Activated CD4-positive, alpha-beta memory T cell treated with anti-CD3 and anti-CD28 coated beads for 36 hours (primary cell): ENCODE measurements at regions of chr3 and their contacts with region 1.

Region 1: GRCh38 chr3:48439820-48440589 is at the starts of genes CCDC51 and TMA7:
- DNase-seq: peak; percentile 99
- H3K4me3 Mint-ChIP-seq: peak within 1 kb of the TSS; percentile 90
- H3K27ac Mint-ChIP-seq: peak within 1 kb of the TSS; percentile 87
- H3K4me1 Mint-ChIP-seq: peaks cover 32% of the 10 kb centered on the region
- H3K27me3 Mint-ChIP-seq: no peaks in the 10 kb centered on the region
- total RNA-seq, gene CCDC51: 24.3 to 24.4 TPM
- total RNA-seq, gene TMA7: 318 to 323 TPM

Region 2: GRCh38 chr3:48188266-48189201 is 251.5 kb before region 1 on chr3 and contains the start of gene CDC25A:
- CTCF ChIA-PET with region 1: interaction called, 31 read pairs
- POLR2A ChIA-PET with region 1: no interaction called
- intact Hi-C with region 1: loop called (anchors 2 kb)
- DNase-seq: peak; percentile 98
- H3K4me3 Mint-ChIP-seq: peak within 1 kb of the TSS; percentile 94
- H3K27ac Mint-ChIP-seq: peak within 1 kb of the TSS; percentile 66
- H3K4me1 Mint-ChIP-seq: peaks cover 14% of the 10 kb centered on the region
- H3K27me3 Mint-ChIP-seq: peaks cover 7% of the 10 kb centered on the region
- total RNA-seq, gene CDC25A: 33.7 to 36.8 TPM

Region 3: GRCh38 chr3:48247401-48247811 is 192.6 kb before region 1 on chr3:
- CTCF ChIA-PET with region 1: interaction called, 20 read pairs
- POLR2A ChIA-PET with region 1: no interaction called
- intact Hi-C with region 1: no loop called
- DNase-seq: peak; percentile 34
- H3K4me3 Mint-ChIP-seq: peak overlapping the region; percentile 27
- H3K27ac Mint-ChIP-seq: peak overlapping the region; percentile 90
- H3K4me1 Mint-ChIP-seq: peaks cover 36% of the 10 kb centered on the region
- H3K27me3 Mint-ChIP-seq: no peaks in the 10 kb centered on the region

Region 4: GRCh38 chr3:48400824-48401433 is 39.1 kb before region 1 on chr3:
- CTCF ChIA-PET with region 1: interaction called, 290 read pairs
- POLR2A ChIA-PET with region 1: interaction called, 7 read pairs
- intact Hi-C with region 1: loop called (anchors 2 kb)
- DNase-seq: peak; percentile 74
- H3K4me3 Mint-ChIP-seq: no peak overlapping the region
- H3K27ac Mint-ChIP-seq: no peak overlapping the region
- H3K4me1 Mint-ChIP-seq: no peaks in the 10 kb centered on the region
- H3K27me3 Mint-ChIP-seq: peaks cover 1% of the 10 kb centered on the region

Region 5: DNA sequence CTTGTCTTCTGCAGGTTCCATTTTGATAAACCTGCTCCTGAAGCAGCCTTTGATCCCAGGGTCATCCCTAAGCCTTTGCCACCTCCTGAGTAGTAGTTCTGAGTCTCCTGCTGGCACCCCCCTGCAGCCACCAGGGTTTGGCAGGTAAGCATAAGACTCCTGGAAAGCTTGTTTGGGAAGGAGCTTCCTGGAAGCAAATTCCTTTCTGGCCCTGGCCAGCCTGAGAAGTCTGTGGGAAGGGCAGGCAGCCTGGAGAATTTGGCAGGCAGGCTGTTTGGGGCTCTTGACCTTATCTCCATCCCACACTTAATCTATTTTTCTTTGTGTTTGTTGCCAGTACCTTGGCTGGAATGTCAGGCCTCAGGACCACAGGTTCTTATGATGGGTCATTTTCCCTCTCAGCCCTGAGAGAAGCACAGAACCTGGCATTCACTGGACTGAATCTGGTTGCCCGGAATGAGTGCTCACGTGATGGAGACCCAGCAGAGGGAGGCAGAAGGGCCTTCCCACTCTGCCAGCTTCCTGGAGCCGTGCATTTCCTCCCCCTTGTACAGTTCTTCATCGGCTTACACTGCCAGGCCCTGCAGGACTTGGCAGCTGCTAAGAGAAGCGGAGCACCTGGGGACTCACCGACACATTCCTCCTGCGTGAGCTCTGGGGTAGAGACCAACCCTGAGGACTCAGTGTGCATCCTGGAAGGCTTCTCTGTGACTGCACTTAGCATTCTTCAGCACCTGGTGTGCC is 19.9 kb after region 1 on chr3:
- CTCF ChIA-PET with region 1: interaction called, 20 read pairs
- POLR2A ChIA-PET with region 1: interaction called, 3 read pairs
- intact Hi-C with region 1: no loop called
- DNase-seq: peak; percentile 0
- H3K4me3 Mint-ChIP-seq: no peak overlapping the region
- H3K27ac Mint-ChIP-seq: no peak overlapping the region
- H3K4me1 Mint-ChIP-seq: no peaks in the 10 kb centered on the region
- H3K27me3 Mint-ChIP-seq: no peaks in the 10 kb centered on the region

Region 6: DNA sequence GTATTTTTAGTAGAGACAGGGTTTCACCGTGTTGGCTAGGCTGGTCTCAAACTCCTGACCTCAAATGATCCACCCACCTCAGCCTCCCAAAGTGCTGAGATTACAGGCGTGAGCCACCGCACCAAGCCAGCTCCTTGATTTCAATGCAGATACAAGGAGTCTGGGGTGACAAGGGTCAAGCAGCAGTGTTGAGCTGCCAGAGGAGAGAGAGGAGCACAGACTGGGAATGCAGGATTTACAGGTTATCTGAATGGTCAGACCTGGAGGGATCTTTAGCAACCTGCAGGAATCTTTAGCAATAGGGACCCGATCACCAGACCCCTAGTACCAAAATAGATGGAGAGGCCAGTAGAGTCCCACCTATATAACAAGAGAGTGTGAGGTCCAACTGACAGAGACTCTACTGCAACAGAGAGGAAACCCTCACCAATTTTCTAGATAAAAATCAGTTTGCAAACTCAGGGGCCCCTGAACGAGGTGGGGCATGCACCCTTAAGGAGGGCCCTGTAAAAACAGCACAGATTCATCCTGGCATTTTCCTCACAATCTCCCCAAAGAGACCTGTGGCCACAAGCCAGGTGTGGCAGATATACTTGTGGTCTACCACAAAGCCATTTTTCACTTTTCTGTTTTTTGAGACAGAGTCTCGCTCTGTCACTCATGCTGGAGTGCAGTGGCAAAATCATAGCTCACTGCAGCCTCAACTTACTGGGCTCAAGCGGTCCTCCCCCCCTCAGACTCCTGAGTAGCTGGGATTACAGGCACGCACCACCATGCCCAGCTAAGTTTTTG is 74.6 kb after region 1 on chr3:
- CTCF ChIA-PET with region 1: interaction called, 12 read pairs
- POLR2A ChIA-PET with region 1: no interaction called
- intact Hi-C with region 1: no loop called
- DNase-seq: peak; percentile 51
- H3K4me3 Mint-ChIP-seq: no peak overlapping the region
- H3K27ac Mint-ChIP-seq: peak overlapping the region; percentile 28
- H3K4me1 Mint-ChIP-seq: peaks cover 59% of the 10 kb centered on the region
- H3K27me3 Mint-ChIP-seq: no peaks in the 10 kb centered on the region

Region 7: GRCh38 chr3:48592282-48593087 is 152.5 kb after region 1 on chr3:
- CTCF ChIA-PET with region 1: no interaction called
- POLR2A ChIA-PET with region 1: no interaction called
- intact Hi-C with region 1: no loop called
- DNase-seq: no peak
- H3K4me3 Mint-ChIP-seq: no peak overlapping the region
- H3K27ac Mint-ChIP-seq: no peak overlapping the region
- H3K4me1 Mint-ChIP-seq: peaks cover 5% of the 10 kb centered on the region
- H3K27me3 Mint-ChIP-seq: peaks cover 36% of the 10 kb centered on the region

Region 8: DNA sequence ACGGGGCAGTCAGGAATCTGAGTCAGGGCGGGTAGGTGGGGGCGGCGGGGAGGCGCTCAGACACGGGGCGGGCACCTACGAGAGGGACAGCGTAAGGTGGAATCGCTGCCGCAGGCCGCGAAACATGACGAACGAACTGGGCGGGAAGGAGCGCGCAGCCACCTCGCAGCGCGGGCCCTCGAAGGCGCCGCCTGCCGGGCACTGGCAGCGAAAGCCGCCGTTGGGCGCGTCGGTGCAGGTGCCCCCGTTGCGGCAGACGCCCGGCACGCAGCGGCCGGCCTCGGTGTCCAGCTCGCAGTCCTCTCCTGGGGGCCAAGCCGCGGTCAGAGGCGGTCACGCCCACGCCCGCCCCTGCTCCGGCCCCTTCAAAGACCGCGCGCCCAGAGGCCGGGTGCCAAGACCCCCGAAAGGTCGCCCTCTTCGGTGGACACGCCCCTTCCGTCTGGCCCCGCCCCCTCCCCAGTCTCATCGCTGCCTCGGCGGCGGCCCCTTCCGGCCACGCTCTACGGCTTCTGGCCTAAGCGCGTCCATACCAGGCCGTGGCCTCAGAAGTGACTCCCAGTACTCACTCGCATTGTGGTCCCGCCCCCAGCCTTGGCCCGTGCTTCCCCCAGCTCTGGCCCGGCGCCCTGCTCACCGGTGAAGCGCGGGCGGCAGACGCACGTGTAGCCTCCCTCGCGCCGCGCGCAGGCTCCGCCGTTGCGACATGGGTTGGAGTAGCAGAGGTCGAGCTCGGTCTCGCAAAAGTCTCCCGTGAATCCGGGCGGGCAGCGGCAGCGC is 216.2 kb after region 1 on chr3:
- CTCF ChIA-PET with region 1: interaction called, 6 read pairs
- POLR2A ChIA-PET with region 1: no interaction called
- intact Hi-C with region 1: loop called (anchors 5 kb)
- DNase-seq: peak; percentile 93
- H3K4me3 Mint-ChIP-seq: peak overlapping the region; percentile 79
- H3K27ac Mint-ChIP-seq: peak overlapping the region; percentile 84
- H3K4me1 Mint-ChIP-seq: peaks cover 5% of the 10 kb centered on the region
- H3K27me3 Mint-ChIP-seq: peaks cover 2% of the 10 kb centered on the region

Region 9: GRCh38 chr3:48747015-48747615 is 307.1 kb after region 1 on chr3:
- CTCF ChIA-PET with region 1: no interaction called
- POLR2A ChIA-PET with region 1: no interaction called
- intact Hi-C with region 1: no loop called
- DNase-seq: no peak
- H3K4me3 Mint-ChIP-seq: no peak overlapping the region
- H3K27ac Mint-ChIP-seq: no peak overlapping the region
- H3K4me1 Mint-ChIP-seq: no peaks in the 10 kb centered on the region
- H3K27me3 Mint-ChIP-seq: no peaks in the 10 kb centered on the region

Region 10: GRCh38 chr3:48788544-48789162 is 348.6 kb after region 1 on chr3:
- CTCF ChIA-PET with region 1: no interaction called
- POLR2A ChIA-PET with region 1: no interaction called
- intact Hi-C with region 1: no loop called
- DNase-seq: no peak
- H3K4me3 Mint-ChIP-seq: no peak overlapping the region
- H3K27ac Mint-ChIP-seq: peak overlapping the region; percentile 50
- H3K4me1 Mint-ChIP-seq: peaks cover 15% of the 10 kb centered on the region
- H3K27me3 Mint-ChIP-seq: no peaks in the 10 kb centered on the region